Activated CD4-positive, alpha-beta T cell treated with anti-CD3 and anti-CD28 coated beads, Interleukin-2, amount 10 ng/mL, durations not matched to agents 7 days and 5 days (primary cell): ENCODE measurements at regions of chr2 and their contacts with region 1.

Region 1: DNA sequence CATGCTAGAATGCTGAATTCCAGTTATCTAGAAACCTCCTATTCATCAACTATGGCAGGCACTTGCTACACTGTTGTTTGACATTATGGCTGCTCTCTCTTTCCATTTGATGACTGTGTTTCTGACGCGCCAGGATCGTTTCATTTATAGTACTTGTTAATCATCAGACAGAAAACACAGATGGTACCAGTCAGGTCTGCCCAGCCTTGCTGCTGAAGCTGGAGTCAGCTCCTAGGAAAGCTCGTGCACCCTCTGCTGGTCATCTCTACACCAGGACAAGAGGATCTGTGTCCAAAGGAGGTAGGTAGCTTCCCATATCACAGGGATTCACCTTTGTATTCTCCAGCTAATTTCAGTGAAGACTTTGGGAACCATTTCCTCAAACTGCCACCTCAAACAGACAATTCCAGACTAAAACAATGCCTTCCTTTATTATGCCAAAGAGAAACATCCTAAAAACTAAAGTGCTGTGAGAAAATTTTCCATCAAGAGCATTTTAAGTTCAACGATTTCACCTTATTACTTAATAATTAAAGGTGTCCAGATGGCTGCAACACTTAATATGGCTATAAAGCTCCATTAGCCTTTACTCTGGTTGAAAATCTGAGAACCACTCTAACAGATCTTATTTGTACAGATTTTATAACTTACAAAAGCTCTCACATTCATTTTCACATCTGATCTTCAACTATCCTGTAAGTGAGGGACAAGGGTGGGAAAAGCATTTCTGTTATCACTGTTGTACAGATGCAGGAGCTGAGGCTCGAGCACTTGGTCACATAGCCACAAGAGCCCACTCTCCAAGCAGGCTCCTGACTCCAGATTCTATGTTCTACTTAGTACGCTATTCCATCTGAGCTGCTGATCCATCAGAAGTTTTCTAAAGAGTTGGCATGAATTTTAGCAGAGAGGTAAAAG is 17.5 kb downstream of the METTL8 start:
- DNase-seq: peak; percentile 86
- H3K4me3 Mint-ChIP-seq: no peak overlapping the region
- H3K27ac Mint-ChIP-seq: no peak overlapping the region
- H3K4me1 Mint-ChIP-seq: peaks cover 16% of the 10 kb centered on the region
- H3K27me3 Mint-ChIP-seq: no peaks in the 10 kb centered on the region

Region 2: GRCh38 chr2:171433763-171434670 is 17.7 kb after region 1 on chr2 and contains the starts of genes DCAF17 and METTL8:
- CTCF ChIA-PET with region 1: interaction called, 25 read pairs
- POLR2A ChIA-PET with region 1: interaction called, 3 read pairs
- DNase-seq: peak; percentile 95
- H3K4me3 Mint-ChIP-seq: peak within 1 kb of the TSS; percentile 83
- H3K27ac Mint-ChIP-seq: peak within 1 kb of the TSS; percentile 94
- H3K4me1 Mint-ChIP-seq: peaks cover 42% of the 10 kb centered on the region
- H3K27me3 Mint-ChIP-seq: no peaks in the 10 kb centered on the region
- total RNA-seq, gene DCAF17: 15.8 to 19.0 TPM
- total RNA-seq, gene METTL8: 20.0 to 21.8 TPM